ENCODE measurements at regions of chr17 and their contacts with region 1.

Region 1: GRCh38 chr17:20155258-20156195 is 146.4 kb downstream of the SPECC1 start:
- ATAC-seq: peak; percentile 91 to 98 (median 96)
- H3K4me3 ChIP-seq: peak overlapping the region; percentile 65 to 94 (median 87)
- H3K27ac ChIP-seq: peak overlapping the region; percentile 61 to 77
- H3K4me1 ChIP-seq: peaks cover 4 to 6% of the 10 kb centered on the region in 2 donors

Region 2: GRCh38 chr17:20266806-20267458 is 111.4 kb after region 1 on chr17:
- in situ Hi-C with region 1: loop called in 1 of 9 experiments (anchors 25 kb)
- ATAC-seq: peak in 3 of 8 experiments; percentile 31 to 60 (median 58)
- H3K4me3 ChIP-seq: no peak overlapping the region
- H3K27ac ChIP-seq: no peak overlapping the region
- H3K4me1 ChIP-seq: peaks cover 24 to 28% of the 10 kb centered on the region in 2 donors